GM13976 (cell line): ENCODE measurements at regions of chr15 and their contacts with region 1.

Region 1: DNA sequence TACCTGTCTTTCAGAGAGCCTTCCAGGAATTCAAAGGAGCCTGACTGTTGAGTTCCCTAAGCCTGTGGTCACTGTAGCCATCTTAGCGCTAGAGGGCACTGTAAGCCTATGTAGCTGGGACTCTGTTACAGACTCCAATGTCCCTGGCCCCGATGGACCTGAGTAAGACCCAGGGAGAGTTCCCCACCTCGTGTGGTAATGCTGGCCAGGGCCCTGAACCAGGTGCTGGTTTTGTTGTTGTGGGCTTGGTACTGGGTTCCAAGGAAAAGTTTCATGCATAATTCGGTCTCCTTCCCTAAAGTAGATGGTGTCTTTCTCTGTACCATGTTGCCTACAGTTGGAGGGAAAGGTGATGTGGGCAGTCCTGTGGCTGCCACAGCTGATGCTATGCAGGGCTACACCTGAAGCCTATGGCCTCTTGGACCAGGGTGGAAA is 32.4 kb downstream of the CDAN1 start:
- DNase-seq: peak; percentile 73
- CTCF ChIP-seq: peak; percentile 65

Region 2: DNA sequence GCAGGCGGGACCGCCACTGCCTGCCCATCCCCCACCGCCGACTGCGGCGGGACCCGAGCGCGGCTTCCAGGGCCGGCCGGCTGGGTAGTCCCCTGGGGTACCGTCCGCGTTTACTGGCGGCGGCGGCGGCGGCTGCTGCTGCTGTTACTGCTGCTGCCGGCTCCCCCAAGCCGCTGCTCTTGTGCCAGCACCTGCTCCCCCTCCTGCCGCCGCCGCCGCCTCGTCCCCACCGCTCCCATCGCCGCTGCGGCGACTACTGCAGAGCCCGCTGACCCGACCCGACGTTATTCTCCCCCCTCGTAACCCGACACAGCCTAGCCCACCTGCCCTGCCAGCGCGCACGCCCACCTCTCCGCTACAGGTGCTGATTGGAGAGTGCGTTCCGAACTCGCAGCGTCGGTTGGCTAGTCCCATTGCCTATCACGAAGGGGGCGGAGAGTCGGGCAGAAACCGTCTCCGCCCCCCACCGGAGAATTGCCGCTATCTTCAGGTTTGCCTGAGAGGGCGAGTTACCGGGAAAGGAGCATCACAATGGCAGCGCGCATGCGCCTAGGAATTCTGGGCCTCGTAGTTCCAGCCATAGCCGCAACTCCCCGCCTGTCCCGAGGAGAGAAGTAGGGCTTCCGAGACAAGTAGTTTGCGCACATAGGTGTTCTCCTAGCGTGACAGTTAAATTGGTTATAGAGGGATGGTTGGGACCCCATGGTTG is 216.2 kb after region 1 on chr15 and contains the start of gene TTBK2:
- in situ Hi-C with region 1: loop called (anchors 10 kb)
- DNase-seq: peak; percentile 94
- CTCF ChIP-seq: no peak

Region 3: DNA sequence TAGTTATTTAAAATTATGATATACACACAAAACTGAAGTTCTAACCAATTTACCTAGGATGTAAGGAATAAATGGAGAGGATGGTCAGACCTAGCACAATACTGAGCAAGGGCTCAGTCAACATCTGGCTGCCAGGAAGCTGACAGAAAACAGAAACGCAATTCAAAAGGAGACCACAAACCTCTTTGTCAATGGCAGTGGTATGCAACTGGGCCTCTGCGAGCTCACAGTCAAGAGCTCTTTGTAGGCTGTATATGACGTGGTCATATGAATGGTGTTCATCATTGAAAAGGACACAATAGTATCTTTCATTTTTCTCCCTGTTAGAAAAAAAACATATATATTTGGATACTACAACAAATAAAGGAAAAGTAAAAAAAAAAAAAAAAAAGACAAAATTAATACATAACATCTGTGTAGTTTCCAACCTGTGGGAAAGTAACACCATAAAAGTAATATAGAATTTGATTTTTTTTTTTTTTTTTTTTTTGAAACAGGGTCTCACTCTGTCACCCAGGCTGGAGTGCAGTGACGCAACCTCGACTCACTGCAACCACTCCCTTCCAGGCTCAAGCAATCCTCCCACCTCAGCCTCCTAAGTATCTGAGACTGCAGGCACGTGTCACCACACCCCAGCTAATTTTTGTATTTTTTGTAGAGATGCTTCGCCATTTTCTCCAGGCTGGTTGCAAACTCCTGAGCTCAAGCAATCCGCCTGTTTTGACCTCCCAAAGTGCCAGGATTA is 363.4 kb after region 1 on chr15:
- in situ Hi-C with region 1: no loop called
- DNase-seq: peak; percentile 26
- CTCF ChIP-seq: no peak